Cardiac septum (tissue), 1 donor: ENCODE measurements at regions of chr4 and their contacts with region 1.

Region 1: DNA sequence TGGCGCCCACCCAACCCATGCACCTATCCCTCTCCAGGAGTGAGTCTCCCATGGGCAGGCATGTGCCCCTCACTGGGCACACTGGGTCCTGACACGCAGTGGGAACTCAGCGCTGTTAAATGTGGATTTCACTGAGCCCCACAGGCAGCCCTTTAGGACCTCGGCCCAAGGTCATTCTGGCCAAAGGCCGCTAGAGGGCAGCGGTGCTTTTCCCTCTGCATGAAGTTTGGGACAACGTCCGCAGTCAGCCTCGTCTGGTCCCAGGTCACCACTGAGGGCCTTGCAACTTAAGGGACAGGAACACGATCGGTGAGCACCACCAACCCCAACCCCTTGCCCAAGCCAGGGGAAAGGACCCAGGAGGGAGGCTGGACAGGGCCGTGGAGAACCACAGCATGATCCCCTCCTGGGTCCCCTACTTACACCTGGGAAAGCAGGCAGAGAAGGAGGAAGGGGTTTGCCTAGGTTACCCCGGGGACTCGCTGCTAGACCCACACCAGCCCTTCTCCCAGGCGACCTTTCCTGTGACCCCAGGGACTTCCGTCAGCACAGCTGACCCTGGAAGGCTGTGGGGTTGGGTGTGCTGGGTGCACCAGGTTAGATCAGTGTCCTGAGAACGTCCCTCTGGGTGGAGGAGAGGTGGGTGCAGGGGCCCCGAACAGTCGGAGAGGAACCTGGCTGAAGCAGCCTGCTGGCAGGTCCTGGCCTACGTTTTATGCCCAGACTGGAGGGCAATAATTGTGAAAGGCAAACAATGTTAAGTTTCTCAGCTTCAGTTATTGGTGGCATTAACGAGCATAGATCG is 24.0 kb downstream of the CYTL1 start:
- DNase-seq: peak; percentile 83

Region 2: GRCh38 chr4:4488405-4489404 is 506.6 kb before region 1 on chr4:
- intact Hi-C with region 1: loop called (anchors 5 kb)
- DNase-seq: no peak

Region 3: GRCh38 chr4:4948370-4948769 is 46.9 kb before region 1 on chr4:
- intact Hi-C with region 1: no loop called
- DNase-seq: no peak

Region 4: GRCh38 chr4:4960574-4960973 is 34.7 kb before region 1 on chr4:
- intact Hi-C with region 1: no loop called
- DNase-seq: no peak

Region 5: GRCh38 chr4:5033281-5033841 is 38.1 kb after region 1 on chr4:
- intact Hi-C with region 1: loop called (anchors 1 kb)
- DNase-seq: no peak

Region 6: GRCh38 chr4:5142726-5143125 is 147.4 kb after region 1 on chr4:
- intact Hi-C with region 1: loop called (anchors 10 kb)
- DNase-seq: no peak

Region 7: DNA sequence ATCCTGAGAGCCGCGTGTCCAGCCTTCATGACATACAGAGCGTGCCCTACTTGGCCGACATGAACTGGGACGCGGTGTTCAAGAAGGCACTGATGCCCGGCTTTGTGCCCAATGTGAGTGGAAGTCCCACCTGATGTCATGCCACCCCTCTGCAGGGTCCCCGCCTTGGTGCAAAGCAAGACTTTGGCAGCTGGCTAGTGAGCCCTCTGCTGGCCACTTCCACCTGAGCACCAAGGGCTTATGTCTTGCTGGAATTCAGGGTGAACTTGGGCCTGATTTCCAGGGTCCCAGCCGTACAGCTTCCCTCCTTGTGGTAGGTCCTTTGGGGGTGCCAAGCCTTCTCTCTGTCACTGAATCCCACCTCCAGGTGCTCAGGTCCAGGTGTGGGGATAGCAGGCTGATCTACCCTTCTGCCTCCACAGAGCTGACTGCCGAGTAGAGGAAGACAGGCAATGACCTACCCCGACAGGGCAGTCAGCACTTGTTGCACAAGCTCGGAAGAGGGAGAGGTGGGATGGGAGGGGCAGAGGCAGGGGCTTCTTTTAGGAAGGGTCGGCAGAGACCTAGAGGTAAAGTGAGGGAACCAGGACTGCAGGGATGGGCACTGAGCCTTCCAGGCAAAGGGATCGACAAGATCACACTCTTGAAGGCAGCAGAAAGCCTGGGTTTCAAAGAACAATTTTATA is 465.0 kb after region 1 on chr4:
- intact Hi-C with region 1: loop called (anchors 10 kb)
- DNase-seq: peak; percentile 56